Activated CD4-positive, alpha-beta T cell treated with anti-CD3 and anti-CD28 coated beads for 36 hours (primary cell): ENCODE measurements at regions of chr6 and their contacts with region 1.

Region 1: DNA sequence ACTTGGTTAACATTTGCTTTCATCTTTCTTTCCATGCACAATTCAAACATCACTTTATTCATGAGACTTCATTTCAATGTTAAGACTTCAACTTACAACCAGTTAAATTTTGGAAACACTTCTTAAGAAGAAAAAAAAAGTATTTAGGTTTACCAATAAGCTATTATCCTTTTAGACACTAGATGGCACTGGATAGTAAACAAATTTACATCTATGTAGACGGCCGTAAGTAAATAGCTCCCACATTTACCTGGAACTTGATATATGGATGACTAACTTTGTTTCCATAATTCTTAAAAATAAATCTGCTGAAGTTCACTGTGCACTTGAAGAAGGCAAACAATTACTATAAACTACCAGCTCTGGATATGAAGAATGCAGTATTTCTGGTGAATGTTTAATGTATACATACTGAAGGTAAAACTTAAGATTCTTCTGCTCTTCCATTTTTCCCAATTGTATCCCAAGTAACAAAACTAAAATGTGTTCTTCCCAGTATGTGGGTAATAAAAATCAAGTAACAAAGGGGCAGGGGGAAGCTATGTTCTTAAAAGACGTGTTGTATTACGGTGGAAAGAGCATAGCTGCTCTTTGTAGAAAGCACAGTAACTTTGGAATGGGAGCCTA is 130.6 kb upstream of the C6orf118 start:
- DNase-seq: no peak
- ATAC-seq: no peak
- H3K4me3 Mint-ChIP-seq: no peak overlapping the region
- H3K27ac Mint-ChIP-seq: no peak overlapping the region
- H3K4me1 Mint-ChIP-seq: no peaks in the 10 kb centered on the region
- H3K27me3 Mint-ChIP-seq: no peaks in the 10 kb centered on the region

Region 2: GRCh38 chr6:165850434-165851019 is 410.5 kb after region 1 on chr6:
- CTCF ChIA-PET with region 1: interaction called, 6 read pairs
- POLR2A ChIA-PET with region 1: no interaction called
- intact Hi-C with region 1: loop called (anchors 1 kb)
- DNase-seq: peak; percentile 77
- ATAC-seq: peak; percentile 66
- H3K4me3 Mint-ChIP-seq: no peak overlapping the region
- H3K27ac Mint-ChIP-seq: no peak overlapping the region
- H3K4me1 Mint-ChIP-seq: peaks cover 10% of the 10 kb centered on the region
- H3K27me3 Mint-ChIP-seq: peaks cover 46% of the 10 kb centered on the region

Region 3: GRCh38 chr6:166106076-166106686 is 666.1 kb after region 1 on chr6:
- CTCF ChIA-PET with region 1: no interaction called
- POLR2A ChIA-PET with region 1: no interaction called
- intact Hi-C with region 1: loop called in 1 of 2 experiments (anchors 5 kb)
- DNase-seq: peak; percentile 84
- ATAC-seq: peak; percentile 83
- H3K4me3 Mint-ChIP-seq: no peak overlapping the region
- H3K27ac Mint-ChIP-seq: no peak overlapping the region
- H3K4me1 Mint-ChIP-seq: peaks cover 3% of the 10 kb centered on the region
- H3K27me3 Mint-ChIP-seq: peaks cover 9% of the 10 kb centered on the region